CD4-positive, alpha-beta memory T cell (primary cell): ENCODE measurements at regions of chr2 and their contacts with region 1.

Region 1: DNA sequence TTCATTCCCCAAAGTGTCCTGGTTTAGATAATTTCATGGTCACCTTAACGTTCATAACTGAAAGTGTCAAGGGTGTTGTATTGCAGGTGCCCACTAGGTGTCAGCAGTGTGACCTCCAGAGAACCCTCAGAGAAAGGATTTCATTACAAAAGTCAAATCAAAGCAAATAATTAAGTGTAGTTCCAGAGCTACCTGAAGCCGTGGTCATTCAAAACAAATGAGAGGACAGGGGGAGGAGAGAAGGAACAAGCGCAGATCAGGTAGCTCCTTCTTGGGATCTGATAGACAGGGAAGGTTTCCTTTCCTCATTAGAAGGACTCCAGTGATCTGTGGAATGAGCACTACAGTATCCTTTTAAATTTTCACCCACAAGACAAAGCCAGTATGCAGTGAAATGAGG is at the start of gene SLC9A4:
- DNase-seq: peak; percentile 19 to 45 (median 42)
- H3K4me3 ChIP-seq: no peak within 1 kb of the TSS
- H3K4me3 Mint-ChIP-seq: no peak within 1 kb of the TSS
- H3K27ac ChIP-seq: no peak within 1 kb of the TSS
- H3K27ac Mint-ChIP-seq: no peak within 1 kb of the TSS
- H3K4me1 ChIP-seq: no peaks in the 10 kb centered on the region
- H3K4me1 Mint-ChIP-seq: no peaks in the 10 kb centered on the region
- H3K27me3 ChIP-seq: peaks cover 4% of the 10 kb centered on the region
- H3K27me3 Mint-ChIP-seq: peaks cover 19 to 22% of the 10 kb centered on the region in 2 donors
- total RNA-seq, gene SLC9A4: 0.08 TPM in 1 of 2 experiments, not detected in the other

Region 2: DNA sequence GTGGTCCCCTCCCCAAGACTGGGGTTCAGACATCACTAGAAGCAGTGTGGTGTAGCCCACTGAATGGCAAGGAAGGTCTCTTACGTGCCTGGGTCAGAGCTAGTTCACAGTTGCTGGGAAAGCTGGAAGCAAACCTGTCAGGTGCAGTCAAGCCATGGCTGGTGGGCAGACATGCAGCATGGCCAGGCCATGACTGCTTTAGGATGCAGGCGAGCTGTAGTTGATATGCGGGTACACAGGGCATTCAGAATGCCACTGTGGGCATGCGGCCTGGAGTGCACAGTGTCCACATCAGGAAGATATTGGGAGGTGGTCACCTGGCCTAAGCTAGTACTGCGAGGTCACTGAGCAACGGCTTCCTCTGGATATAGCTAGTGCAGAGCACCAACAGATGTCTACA is 11.8 kb before region 1 on chr2:
- CTCF ChIA-PET with region 1: interaction called, 14 read pairs
- POLR2A ChIA-PET with region 1: no interaction called
- intact Hi-C with region 1: no loop called
- DNase-seq: no peak
- H3K4me3 ChIP-seq: no peak overlapping the region
- H3K4me3 Mint-ChIP-seq: no peak overlapping the region
- H3K27ac ChIP-seq: no peak overlapping the region
- H3K27ac Mint-ChIP-seq: no peak overlapping the region
- H3K4me1 ChIP-seq: no peaks in the 10 kb centered on the region
- H3K4me1 Mint-ChIP-seq: no peaks in the 10 kb centered on the region
- H3K27me3 ChIP-seq: no peaks in the 10 kb centered on the region
- H3K27me3 Mint-ChIP-seq: peaks cover 3 to 10% of the 10 kb centered on the region in 2 donors

Region 3: GRCh38 chr2:102487761-102488466 is 14.9 kb after region 1 on chr2:
- CTCF ChIA-PET with region 1: interaction called, 20 read pairs
- POLR2A ChIA-PET with region 1: no interaction called
- intact Hi-C with region 1: no loop called
- DNase-seq: no peak
- H3K4me3 ChIP-seq: no peak overlapping the region
- H3K4me3 Mint-ChIP-seq: no peak overlapping the region
- H3K27ac ChIP-seq: no peak overlapping the region
- H3K27ac Mint-ChIP-seq: no peak overlapping the region
- H3K4me1 ChIP-seq: no peaks in the 10 kb centered on the region
- H3K4me1 Mint-ChIP-seq: peaks cover 6 to 12% (median 10%) of the 10 kb centered on the region in 4 donors
- H3K27me3 ChIP-seq: peaks cover 6% of the 10 kb centered on the region
- H3K27me3 Mint-ChIP-seq: peaks cover 13 to 16% of the 10 kb centered on the region in 2 donors

Region 4: DNA sequence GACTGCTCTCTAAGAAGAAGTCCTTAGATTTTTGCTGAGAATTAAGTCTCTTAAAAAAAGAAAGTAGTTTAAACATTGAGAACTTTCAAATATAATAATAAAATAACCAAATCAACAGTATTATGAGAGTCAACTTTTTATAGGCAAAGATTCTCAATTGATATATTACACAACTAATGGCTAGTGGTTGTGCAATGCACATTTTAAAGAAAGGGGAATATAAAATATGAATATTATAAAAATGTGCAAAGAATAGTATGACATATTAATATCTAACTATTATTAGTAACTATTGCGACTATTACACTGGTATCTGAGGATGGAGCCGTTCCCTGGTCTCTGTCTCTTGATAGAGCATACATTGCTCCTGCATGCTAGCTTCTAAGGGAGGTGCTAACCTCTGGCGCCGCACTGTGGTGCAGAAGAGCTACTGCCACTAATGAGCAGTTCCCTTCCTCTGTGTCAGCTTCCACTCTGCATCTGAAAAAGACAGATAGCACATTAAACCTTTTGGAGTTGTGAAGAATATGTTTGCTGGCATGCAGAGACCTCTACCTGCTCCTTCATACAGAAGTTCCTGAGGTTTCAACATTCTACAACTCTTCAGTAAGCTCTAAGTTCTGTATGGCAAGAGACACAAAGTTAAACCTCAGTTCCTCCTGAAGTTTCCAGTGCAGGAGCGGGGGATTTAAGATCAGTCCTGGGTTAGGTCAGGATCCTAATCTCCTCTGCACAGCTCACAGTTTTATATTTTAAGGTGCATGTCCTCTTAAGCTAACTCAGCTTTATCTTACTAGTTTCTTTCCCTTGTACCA is 142.8 kb after region 1 on chr2:
- CTCF ChIA-PET with region 1: interaction called, 7 read pairs
- POLR2A ChIA-PET with region 1: no interaction called
- intact Hi-C with region 1: loop called (anchors 1 kb)
- DNase-seq: peak; percentile 6 to 37 (median 8)
- H3K4me3 ChIP-seq: no peak overlapping the region
- H3K4me3 Mint-ChIP-seq: no peak overlapping the region
- H3K27ac ChIP-seq: no peak overlapping the region
- H3K27ac Mint-ChIP-seq: no peak overlapping the region
- H3K4me1 ChIP-seq: peaks cover 7% of the 10 kb centered on the region
- H3K4me1 Mint-ChIP-seq: peaks cover 6 to 11% (median 8%) of the 10 kb centered on the region in 4 donors
- H3K27me3 ChIP-seq: peaks cover 12% of the 10 kb centered on the region
- H3K27me3 Mint-ChIP-seq: peaks cover 26 to 40% of the 10 kb centered on the region in 2 donors